Cardiac septum (tissue), 1 donor: ENCODE measurements at regions of chr17 and their contacts with region 1.

Region 1: DNA sequence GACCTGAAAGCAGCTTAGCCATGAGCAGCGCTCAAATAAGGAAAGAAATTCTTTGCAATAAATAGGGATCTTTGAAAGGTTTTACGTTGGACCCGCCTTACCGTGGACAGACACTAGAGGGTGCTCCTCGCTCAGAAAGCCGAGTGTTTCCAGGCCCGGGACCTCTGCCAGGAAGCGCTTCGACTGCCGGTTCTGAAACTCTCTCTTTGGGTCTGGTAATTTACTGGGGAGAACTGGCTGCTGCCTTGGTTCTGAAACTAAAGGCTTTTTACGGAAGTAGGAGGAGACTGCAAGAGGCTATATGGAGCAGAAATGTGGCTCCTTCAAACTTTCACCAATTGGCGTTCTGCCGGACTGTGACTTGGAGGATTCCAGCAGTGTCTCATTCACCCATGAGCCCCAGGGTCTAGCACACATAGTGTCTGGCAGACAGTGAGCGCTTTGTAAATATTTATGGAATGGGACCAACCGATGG is 45.6 kb upstream of the HOXB9 start:
- DNase-seq: peak; percentile 82

Region 2: DNA sequence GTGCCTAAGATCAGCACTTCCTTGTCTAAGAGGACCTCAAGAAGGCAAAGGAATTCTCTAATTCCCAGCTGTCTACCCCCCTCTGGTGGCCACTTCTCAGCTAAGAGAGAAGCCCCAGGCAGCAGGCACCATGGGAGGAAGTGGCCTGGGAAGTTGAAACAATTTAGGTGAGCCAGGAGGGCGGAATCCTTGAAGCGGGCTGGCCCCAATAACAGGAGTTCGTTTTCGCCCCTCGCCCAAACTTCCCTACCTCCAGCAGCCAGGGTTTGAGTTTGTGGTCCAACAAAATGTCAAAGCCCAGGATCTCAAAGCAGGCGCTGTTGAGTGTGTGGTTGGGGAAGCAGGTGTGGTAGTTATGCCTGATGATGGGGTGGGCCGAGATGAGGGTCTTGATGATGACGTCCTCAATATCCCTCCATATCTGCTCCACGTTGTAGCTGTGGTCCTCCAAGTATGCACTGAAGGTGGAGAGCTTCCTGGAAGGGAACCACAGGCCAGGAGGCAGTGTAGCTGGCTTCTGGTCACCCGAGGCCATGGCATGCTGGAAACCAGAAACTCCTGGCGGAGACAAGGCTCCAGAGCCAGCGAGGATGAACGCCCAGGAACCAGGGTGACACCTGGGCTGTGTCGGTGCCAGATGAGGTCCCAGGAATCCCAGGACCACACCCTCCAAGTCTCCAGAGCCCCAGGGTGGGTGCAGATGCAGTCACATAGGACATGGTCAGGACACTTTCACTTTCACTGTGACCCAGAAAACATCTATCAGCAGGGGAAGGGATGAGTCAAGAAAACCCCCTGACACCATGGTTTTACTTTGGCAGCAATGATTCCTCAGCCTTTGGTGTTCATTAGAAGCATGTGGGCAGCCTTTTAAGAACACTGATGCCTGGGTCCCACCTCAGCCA is 119.6 kb after region 1 on chr17:
- intact Hi-C with region 1: loop called (anchors 5 kb)
- DNase-seq: no peak